OCI-LY7 (cell line): ENCODE measurements at regions of chr12 and their contacts with region 1.

Region 1: DNA sequence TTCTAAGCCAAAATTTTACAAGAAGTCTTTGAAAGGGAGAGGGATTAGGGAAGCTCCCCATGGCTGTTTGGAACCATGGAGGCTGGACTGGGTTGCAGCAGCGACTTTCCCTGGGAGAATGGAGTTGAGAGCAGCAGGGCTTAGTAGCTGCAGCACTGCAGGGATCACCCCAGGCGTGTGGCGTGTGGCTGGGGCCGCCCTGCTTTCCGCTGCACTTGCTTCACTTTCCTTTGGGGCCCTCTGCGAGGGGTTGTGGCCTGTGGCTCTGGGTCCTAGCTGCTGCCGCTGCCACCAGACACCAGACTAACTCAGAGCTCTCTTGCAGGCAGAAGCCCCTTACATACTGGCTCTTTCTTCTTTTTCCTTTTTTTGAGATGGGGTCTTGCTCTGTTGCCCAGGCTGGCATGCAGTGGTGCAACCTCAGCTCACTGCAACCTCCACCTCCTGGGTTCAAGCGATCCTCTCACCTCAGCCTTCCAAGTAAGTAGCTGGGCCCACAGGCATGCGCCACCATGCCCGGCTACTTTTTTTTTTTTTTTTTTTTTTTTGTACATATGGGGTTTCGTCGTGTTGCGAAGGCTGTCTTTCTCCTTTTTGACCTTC is 25.4 kb downstream of the CCDC62 start:
- DNase-seq: no peak
- H3K4me3 ChIP-seq: no peak overlapping the region
- H3K27ac ChIP-seq: no peak overlapping the region
- H3K4me1 ChIP-seq: no peaks in the 10 kb centered on the region
- CTCF ChIP-seq: no peak

Region 2: DNA sequence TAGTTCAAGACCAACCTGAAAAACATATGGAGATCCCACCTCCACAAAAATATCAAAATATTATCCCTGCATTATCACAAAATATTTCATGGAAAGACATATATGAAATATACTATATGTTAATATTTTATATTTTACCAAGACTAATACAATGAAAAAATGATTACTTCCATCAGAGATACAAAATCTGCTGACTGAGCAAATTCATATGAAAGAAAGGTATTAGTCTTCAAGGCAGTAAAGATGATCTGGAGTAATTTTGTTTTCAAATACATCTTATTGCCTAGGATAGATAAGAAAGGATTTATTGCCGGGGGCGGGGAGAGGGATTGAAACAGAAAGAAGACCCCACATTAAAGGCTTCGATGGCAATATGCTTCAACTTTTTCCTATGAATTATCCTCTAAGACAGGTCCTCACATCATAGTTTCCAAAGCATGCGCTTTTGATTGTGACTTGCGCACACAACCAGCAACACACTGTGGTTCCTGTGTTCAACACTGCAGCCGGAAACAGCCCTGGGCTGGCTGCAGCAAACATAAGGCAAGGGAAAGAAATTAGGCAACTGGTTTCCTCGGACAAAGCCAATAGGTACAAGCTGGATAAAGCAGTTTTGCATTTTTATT is 1978.7 kb before region 1 on chr12:
- CTCF ChIA-PET with region 1: no interaction called
- POLR2A ChIA-PET with region 1: no interaction called
- intact Hi-C with region 1: no loop called
- DNase-seq: no peak
- H3K4me3 ChIP-seq: no peak overlapping the region
- H3K27ac ChIP-seq: no peak overlapping the region
- H3K4me1 ChIP-seq: no peaks in the 10 kb centered on the region
- CTCF ChIP-seq: no peak

Region 3: DNA sequence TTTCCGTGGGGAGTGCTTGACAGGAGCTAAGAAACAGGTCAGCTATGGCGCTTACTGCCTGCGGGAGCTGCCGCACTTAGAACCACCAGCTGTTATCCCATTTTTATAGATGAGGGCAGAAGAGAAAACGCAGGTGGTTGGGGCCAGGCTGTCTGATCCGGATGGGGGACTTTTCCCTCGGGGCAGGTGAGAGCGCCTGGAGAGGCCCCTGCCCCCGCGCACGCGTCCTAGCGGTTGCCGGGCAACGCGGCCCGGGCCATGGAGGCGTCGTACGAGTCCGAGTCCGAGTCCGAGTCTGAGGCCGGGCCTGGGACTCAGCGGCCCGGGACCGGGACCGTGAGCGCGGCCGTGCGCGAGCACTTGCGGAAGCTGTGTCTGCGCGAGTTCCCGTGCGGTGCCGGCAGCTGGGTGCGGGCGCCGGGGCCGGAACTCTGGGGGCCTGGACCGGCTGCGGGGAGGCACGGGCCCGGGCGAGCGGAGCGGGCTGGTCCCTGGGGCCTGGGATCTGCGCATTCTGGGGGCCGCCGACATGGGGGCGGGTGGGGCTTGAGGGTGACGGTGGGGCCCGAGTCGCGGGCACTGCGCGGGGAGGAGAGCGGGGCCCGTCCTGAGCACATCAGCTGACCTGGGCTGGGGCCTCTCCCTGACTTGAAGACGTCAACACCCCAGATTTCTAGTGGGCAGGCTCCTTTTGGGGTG is 616.7 kb before region 1 on chr12 and contains the start of gene LRRC43:
- CTCF ChIA-PET with region 1: no interaction called
- POLR2A ChIA-PET with region 1: no interaction called
- intact Hi-C with region 1: no loop called
- DNase-seq: no peak
- H3K4me3 ChIP-seq: no peak within 1 kb of the TSS
- H3K27ac ChIP-seq: no peak within 1 kb of the TSS
- H3K4me1 ChIP-seq: no peaks in the 10 kb centered on the region
- CTCF ChIP-seq: no peak
- total RNA-seq, gene LRRC43: not detected in 2 replicates

Region 4: DNA sequence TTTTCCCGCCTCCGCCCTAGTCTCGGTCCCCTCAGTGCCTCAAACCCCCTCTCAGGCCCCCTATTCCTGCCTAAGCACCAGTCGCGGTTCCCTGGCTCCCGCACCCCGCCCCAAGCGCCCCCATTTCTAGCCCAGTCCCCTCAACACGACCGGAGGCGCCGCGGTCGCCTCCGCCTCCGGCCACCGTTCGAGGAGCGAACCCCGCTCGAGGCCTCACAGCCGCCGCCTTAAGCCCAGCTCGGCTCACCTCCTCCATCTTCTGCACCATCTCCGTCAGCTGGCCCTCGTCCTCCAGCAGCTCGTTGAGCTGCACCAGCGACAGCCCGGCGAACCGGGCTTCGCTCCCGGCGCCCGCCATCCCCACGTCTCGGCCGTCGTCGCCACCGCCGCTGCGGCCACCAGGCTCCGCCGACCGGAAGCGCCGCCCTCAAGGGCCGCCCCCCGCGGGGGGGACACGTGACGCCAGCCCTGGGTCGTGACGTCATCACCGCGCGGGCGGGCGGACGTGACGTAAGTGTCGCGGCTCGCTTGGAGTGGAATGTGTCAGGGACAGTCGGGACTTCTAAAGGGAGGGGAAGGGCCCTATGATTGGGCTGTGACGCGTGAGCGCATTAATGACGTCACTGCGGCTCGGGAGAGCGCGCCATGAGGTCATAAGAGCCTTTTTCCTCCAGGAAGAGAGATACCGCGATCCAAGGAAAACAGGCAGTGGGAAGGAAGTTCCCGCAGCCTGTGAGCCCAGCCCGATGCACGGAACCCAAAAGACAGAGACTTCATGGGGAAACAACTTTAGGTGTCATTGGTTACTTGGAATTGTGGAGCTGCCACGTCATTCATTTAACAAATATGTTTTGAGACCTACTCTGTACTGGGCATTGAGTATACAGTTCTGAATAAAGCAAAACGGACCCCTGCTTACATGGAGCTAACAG is 96.2 kb after region 1 on chr12 and contains the start of gene VPS37B:
- CTCF ChIA-PET with region 1: no interaction called
- POLR2A ChIA-PET with region 1: interaction called, 10 read pairs
- intact Hi-C with region 1: no loop called
- DNase-seq: no peak
- H3K4me3 ChIP-seq: no peak within 1 kb of the TSS
- H3K27ac ChIP-seq: no peak within 1 kb of the TSS
- H3K4me1 ChIP-seq: peaks cover 25% of the 10 kb centered on the region
- CTCF ChIP-seq: no peak
- total RNA-seq, gene VPS37B: 1.5 and 2.5 TPM in 2 replicates

Region 5: GRCh38 chr12:123075646-123076171 is 276.0 kb after region 1 on chr12:
- CTCF ChIA-PET with region 1: no interaction called
- POLR2A ChIA-PET with region 1: no interaction called
- intact Hi-C with region 1: no loop called
- DNase-seq: peak; percentile 63
- H3K4me3 ChIP-seq: no peak overlapping the region
- H3K27ac ChIP-seq: no peak overlapping the region
- H3K4me1 ChIP-seq: peaks cover 18% of the 10 kb centered on the region
- CTCF ChIP-seq: peak; percentile 23; the same call in 1 of the 2 replicates